Heart right ventricle (tissue), 16 donors: ENCODE measurements at regions of chr19 and their contacts with region 1.

Region 1: DNA sequence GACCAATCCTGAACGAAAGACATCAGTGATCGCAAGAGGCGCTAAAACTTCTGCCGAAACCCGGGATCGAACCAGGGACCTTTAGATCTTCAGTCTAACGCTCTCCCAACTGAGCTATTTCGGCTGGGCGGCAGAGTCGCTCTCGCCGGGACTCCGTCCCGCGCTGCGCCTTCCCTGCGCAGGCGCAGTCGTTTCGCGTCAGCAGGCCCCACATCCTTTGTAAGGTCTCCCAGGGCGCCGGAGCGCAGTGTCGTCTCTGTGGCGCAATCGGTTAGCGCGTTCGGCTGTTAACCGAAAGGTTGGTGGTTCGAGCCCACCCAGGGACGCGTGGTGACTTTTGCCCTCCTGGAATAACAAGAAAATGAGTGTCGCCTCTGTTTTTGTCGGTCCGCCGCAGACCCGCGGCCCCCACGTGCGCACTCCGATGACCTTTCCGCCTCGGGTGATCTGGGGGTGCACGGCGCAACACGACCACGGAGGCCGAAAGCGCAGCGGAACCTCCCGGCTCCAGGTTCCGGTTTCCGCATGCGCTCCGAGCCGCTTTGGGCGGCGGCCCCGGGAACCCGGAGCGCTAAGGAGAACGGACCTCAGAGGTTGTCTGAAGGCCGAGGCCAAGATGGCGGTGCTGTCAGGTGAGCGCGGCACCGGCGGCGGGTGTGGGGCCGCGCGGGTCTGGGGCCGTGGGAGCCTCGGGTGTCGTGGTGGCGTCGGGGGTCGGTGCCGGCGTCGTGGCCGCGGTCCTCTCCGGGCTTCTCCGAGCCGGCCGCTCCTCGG is at the start of gene NDUFS7:
- DNase-seq: peak; percentile 88 to 90
- ATAC-seq: peak; percentile 85 to 93 (median 88)
- H3K4me3 ChIP-seq: peak within 1 kb of the TSS; percentile 76 to 100 (median 94)
- H3K27ac ChIP-seq: peak within 1 kb of the TSS; percentile 64 to 99 (median 97)
- H3K4me1 ChIP-seq: peaks cover 13 to 56% (median 42%) of the 10 kb centered on the region in 9 donors
- H3K27me3 ChIP-seq: no peaks in the 10 kb centered on the region
- CTCF ChIP-seq: peak in 3 of 9 donors; percentile 14 to 21 (median 18)
- total RNA-seq, gene NDUFS7: 248 to 446 (median 377) TPM

Region 2: DNA sequence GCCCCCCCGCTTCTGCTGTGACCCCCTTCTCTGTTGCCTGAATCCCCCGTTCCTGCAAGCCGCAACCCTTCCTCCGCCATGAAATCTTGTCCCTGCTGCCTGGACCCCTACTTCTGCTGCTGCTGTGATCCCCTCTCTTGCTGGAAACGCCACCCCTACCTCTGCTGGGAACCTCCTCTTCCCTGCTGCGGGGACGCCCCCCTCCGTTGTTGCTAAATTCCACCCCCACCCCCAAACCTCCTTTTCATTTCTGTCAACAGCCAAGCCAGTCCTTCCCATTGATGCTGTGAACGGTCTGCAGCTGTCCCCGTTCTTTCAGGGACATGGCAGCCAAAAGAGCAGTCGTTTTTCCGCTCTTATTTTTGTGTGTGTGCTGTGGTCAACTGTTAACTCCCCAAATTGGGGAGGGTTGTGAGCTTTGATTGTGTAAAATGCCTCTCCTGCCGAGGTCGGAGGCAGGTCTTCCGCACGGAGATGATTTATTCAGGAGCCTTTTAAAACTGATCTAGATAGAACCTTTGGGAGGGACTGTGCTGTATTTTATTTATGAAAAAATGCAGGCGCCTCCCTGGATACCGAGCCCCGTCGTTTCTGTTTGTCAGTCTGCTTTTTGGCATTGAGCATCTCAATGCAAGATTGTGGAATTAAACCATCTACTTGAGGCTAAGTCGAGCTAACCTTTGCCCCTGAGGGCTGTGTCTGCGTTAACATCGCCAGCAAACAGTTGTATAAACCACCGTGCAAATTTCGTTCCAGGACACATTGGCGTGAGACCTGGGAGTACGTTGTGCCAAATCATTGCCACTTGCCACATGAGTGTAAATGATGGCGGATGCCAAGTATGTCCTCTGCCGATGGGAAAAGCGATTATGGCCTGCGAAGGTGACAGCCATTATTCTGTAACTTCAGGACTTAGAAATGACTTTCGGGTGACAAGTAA is 27.7 kb before region 1 on chr19:
- intact Hi-C with region 1: loop called in 1 of 10 experiments (anchors 1 kb)
- DNase-seq: no peak
- ATAC-seq: peak in 2 of 8 donors; percentile 3 to 8
- H3K4me3 ChIP-seq: peak overlapping the region in 9 of 10 donors; percentile 69 to 93 (median 88)
- H3K27ac ChIP-seq: peak overlapping the region in 8 of 10 donors; percentile 32 to 99 (median 77)
- H3K4me1 ChIP-seq: peaks cover 4 to 30% (median 21%) of the 10 kb centered on the region in 9 donors
- H3K27me3 ChIP-seq: no peaks in the 10 kb centered on the region
- CTCF ChIP-seq: no peak

Region 3: DNA sequence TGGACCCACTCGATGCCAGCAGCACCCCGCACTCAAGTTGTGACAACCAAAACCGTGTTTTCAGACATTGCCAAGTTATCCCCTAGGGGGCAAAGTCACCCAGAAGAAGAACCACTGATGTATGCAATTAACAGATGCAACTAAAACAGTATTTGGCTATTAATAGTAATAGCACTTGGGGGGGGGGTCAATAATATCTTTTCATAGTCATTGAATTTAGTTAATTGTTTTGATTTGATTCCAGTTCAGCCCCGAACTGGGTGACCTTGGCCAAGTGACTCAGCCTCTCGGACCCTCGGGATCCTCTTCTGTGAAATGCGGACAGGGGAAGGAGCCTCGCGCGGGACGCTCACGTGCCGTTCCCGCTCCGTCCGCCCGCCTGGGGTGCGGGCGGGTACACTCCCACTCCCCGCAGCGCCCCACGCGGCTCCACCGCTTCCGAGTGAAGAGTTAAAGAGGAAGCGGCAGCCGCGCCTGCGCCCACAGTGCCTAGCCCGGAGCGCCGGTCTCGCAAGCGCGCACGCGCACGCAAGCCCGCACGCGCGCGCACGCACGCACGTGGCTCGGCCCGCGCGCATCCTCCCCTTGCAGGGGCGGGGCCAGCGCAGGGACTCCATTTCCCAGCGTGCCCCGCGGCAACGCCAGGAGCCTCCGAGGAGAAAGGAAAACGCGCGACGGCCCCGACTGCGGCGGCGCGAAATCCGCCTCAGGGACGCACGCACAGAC is 23.4 kb after region 1 on chr19:
- intact Hi-C with region 1: loop called in 1 of 10 experiments (anchors 2 kb)
- DNase-seq: peak; percentile 99 to 100
- ATAC-seq: peak; percentile 87 to 94 (median 92)
- H3K4me3 ChIP-seq: peak overlapping the region; percentile 12 to 99 (median 76)
- H3K27ac ChIP-seq: peak overlapping the region in 9 of 10 donors; percentile 68 to 98 (median 82)
- H3K4me1 ChIP-seq: peaks cover 28 to 61% (median 40%) of the 10 kb centered on the region in 9 donors
- H3K27me3 ChIP-seq: peaks cover 0 to 20% (median 0%) of the 10 kb centered on the region in 7 donors
- CTCF ChIP-seq: peak in 6 of 9 donors; percentile 24 to 45 (median 36)

Region 4: GRCh38 chr19:1429750-1430149 is 46.3 kb after region 1 on chr19:
- intact Hi-C with region 1: no loop called
- DNase-seq: peak; percentile 63
- ATAC-seq: peak; percentile 63 to 90 (median 78)
- H3K4me3 ChIP-seq: no peak overlapping the region
- H3K27ac ChIP-seq: peak overlapping the region in 6 of 10 donors; percentile 2 to 77 (median 58)
- H3K4me1 ChIP-seq: peaks cover 0 to 34% (median 16%) of the 10 kb centered on the region in 9 donors
- H3K27me3 ChIP-seq: no peaks in the 10 kb centered on the region
- CTCF ChIP-seq: no peak